A549 (cell line): ENCODE measurements at regions of chr15 and their contacts with region 1.

Region 1: DNA sequence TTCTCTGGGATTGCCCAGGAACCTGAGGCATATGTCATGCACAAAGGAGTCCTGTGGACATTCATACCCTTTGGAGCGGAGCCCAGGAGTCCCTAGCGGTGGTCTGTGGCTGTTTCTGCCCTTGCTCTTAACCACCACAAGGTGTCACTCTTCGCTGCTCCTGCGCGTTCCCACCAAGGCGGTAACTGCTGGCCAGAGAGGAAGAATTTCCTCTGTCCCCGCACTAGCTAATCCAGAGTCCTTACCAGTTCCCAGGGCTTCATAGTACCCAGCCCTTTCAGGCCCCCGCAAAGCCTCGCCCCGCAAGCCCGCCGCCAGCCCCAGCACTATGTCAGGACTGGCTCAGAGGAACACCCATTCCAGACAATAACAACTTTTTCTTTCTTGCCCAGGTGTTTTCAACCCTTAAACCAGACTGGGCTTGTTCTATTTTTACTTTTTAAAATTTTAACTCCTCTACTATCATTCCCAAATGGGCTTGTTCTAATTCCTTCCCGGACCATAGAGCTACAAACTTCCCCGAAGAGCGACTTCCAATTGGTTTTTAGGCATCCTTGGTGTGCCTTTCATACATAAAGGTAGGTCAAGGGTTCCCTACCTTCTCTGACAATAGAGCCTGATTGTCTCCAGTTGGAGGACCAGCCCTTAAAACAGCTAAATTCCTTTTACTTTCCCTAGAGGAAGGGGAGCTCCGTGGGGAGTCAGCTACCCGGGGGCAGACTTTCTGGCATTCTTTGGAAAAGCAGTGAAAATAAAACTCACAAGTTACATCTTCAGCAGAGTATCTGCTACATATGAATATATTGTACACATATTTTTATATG is 31.8 kb upstream of the ZNF774 start:
- DNase-seq: peak; percentile 92 to 95
- ATAC-seq: peak; percentile 98 to 99
- H3K4me3 ChIP-seq: no peak overlapping the region
- H3K27ac ChIP-seq: peak overlapping the region; percentile 60 to 76
- H3K4me1 ChIP-seq: peaks cover 13% of the 10 kb centered on the region
- CTCF ChIP-seq: peak; percentile 99
- EP300 ChIP-seq: no peak
- POLR2A ChIP-seq: no peak
- RAD21 ChIP-seq: peak; percentile 99 to 100

Region 2: DNA sequence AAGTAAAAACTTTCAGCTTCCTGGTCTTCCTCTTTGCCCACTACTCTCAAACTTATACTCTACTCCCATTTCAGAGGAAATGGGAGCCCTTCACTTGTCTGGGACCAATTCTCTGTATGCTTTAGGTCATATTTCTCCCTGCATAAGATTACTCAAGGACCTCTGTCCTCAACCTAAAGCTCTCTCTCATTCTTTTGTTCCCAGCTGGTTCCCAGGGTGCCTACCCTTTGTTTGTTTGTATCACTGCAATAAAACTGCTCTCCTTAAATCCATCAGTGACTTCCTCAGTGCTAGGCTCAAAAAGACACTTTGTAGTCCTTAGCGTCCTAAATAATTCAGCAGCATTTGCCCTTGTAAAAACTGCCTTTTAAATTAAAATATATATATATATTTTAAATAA is 51.9 kb before region 1 on chr15:
- CTCF ChIA-PET with region 1: no interaction called
- POLR2A ChIA-PET with region 1: no interaction called
- DNase-seq: no peak
- ATAC-seq: no peak
- H3K4me3 ChIP-seq: no peak overlapping the region
- H3K27ac ChIP-seq: no peak overlapping the region
- H3K4me1 ChIP-seq: peaks cover 31% of the 10 kb centered on the region
- CTCF ChIP-seq: no peak
- EP300 ChIP-seq: no peak
- POLR2A ChIP-seq: no peak
- RAD21 ChIP-seq: no peak

Region 3: DNA sequence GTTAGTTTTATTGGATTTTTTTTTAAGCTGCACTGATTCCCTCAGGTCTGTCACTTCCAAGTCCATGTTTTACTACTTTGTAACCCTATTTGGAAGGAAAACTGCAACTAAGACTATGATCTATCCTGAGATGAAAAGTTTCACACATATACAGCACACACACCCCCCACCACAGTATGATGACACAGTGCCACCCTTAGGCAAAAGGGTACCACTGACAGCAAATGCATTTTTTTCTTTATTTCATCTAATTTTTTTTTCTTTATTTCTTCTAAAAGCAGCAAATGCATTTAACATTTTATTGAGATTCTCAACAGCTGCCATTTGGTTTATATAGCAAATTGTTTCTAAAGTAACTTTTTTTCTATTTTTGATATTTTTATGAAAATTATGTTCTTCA is 33.6 kb before region 1 on chr15:
- CTCF ChIA-PET with region 1: interaction called, 45 read pairs
- POLR2A ChIA-PET with region 1: no interaction called
- DNase-seq: peak; percentile 55 to 67
- ATAC-seq: peak; percentile 83 to 90; a peak in 5 of 6 replicates
- H3K4me3 ChIP-seq: no peak overlapping the region
- H3K27ac ChIP-seq: no peak overlapping the region
- H3K4me1 ChIP-seq: no peaks in the 10 kb centered on the region
- CTCF ChIP-seq: peak; percentile 86
- EP300 ChIP-seq: no peak
- POLR2A ChIP-seq: no peak
- RAD21 ChIP-seq: peak; percentile 81 to 90

Region 4: DNA sequence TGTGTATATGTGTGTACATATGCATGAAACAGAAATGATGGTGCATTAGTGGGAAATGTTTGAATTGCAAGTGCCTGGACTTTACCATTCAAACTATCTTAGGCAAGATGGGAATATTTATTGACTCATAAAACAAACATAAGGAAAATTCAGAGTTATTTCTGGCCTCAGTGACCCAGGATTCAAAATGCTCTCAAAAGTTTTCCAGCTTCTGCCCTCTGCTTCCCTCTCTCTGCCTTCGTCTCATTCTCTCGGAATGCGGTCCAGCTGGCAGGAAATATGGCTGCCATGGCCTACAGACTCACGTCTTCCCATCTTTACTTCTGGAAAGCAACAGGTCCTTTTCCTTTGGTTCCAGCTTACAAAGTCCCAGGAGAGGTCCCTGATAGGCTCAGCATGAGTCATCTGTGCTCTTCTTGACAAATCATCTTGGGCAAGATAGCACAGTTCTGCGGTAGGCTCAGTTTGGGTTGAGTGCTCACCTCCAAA is 23.1 kb after region 1 on chr15:
- CTCF ChIA-PET with region 1: interaction called, 119 read pairs
- POLR2A ChIA-PET with region 1: no interaction called
- DNase-seq: peak in 1 of 2 experiments; percentile 43
- ATAC-seq: peak; percentile 41 to 62; a peak in 4 of 6 replicates
- H3K4me3 ChIP-seq: no peak overlapping the region
- H3K27ac ChIP-seq: no peak overlapping the region
- H3K4me1 ChIP-seq: peaks cover 13% of the 10 kb centered on the region
- CTCF ChIP-seq: no peak
- EP300 ChIP-seq: no peak
- POLR2A ChIP-seq: no peak
- RAD21 ChIP-seq: no peak

Region 5: DNA sequence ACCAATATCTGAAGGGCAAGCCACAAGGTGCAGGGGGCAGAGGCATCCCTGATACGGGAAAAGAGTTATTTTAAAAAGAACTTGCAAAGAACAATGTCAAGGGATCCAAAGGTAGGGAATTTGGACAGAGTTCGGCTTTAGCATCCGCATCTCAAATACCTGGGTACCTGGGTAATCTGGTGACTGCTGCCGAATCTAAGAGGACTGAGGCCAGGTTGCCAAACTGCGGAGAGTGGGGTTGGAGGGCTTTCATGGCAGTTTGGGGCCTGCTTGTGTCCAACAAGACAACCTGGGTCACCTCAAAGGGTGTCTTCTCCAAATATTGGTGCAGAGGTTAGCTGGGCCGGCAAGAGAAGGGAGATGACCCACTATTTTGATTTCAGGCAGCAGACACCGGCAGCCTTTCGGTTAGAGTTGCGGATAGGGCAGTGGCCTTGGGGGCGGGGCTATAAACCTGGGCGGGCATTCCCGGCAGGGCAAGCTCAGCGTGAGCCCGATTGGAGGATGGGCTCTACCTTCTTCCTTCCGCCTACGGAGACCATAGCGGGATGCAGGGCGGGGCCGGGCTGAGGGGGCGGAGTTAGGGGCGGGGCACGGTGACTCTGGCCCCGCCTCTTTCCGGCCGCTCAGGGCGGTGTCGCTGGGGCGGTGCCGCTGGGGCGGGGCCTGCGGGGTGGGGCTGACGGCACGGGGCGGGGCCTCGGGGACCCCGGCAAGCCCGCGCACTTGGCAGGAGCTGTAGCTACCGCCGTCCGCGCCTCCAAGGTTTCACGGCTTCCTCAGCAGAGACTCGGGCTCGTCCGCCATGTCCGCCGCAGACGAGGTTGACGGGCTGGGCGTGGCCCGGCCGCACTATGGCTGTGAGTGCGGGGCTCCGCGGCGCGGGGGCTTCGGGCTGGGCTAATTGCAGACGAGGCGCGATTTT is 67.5 kb after region 1 on chr15 and contains the start of gene IQGAP1:
- CTCF ChIA-PET with region 1: interaction called, 18 read pairs
- POLR2A ChIA-PET with region 1: interaction called, 3 read pairs
- DNase-seq: peak; percentile 98
- ATAC-seq: peak; percentile 96 to 97
- H3K4me3 ChIP-seq: peak within 1 kb of the TSS; percentile 78
- H3K27ac ChIP-seq: peak within 1 kb of the TSS; percentile 93 to 95
- H3K4me1 ChIP-seq: peaks cover 10% of the 10 kb centered on the region; the same call in 2 of the 3 replicates
- CTCF ChIP-seq: no peak
- EP300 ChIP-seq: no peak
- POLR2A ChIP-seq: peak; percentile 94
- RAD21 ChIP-seq: peak in 1 of 2 experiments; percentile 37; a peak in 2 of 5 replicates
- polyA plus RNA-seq, gene IQGAP1: 168 and 181 TPM in 2 replicates

Region 6: GRCh38 chr15:90425726-90426346 is 105.6 kb after region 1 on chr15:
- CTCF ChIA-PET with region 1: interaction called, 23 read pairs
- POLR2A ChIA-PET with region 1: no interaction called
- DNase-seq: no peak
- ATAC-seq: no peak
- H3K4me3 ChIP-seq: no peak overlapping the region
- H3K27ac ChIP-seq: peak overlapping the region in 1 of 2 experiments; percentile 45; a peak in 3 of 6 replicates
- H3K4me1 ChIP-seq: peaks cover 32% of the 10 kb centered on the region
- CTCF ChIP-seq: no peak
- EP300 ChIP-seq: no peak
- POLR2A ChIP-seq: no peak
- RAD21 ChIP-seq: no peak

Region 7: GRCh38 chr15:90482124-90483011 is 162.1 kb after region 1 on chr15:
- CTCF ChIA-PET with region 1: interaction called, 412 read pairs
- POLR2A ChIA-PET with region 1: interaction called, 3 read pairs
- DNase-seq: peak; percentile 35 to 64
- ATAC-seq: peak; percentile 83 to 87; a peak in 5 of 6 replicates
- H3K4me3 ChIP-seq: no peak overlapping the region
- H3K27ac ChIP-seq: no peak overlapping the region
- H3K4me1 ChIP-seq: no peaks in the 10 kb centered on the region
- CTCF ChIP-seq: peak; percentile 98
- EP300 ChIP-seq: no peak
- POLR2A ChIP-seq: no peak
- RAD21 ChIP-seq: peak; percentile 98

Region 8: DNA sequence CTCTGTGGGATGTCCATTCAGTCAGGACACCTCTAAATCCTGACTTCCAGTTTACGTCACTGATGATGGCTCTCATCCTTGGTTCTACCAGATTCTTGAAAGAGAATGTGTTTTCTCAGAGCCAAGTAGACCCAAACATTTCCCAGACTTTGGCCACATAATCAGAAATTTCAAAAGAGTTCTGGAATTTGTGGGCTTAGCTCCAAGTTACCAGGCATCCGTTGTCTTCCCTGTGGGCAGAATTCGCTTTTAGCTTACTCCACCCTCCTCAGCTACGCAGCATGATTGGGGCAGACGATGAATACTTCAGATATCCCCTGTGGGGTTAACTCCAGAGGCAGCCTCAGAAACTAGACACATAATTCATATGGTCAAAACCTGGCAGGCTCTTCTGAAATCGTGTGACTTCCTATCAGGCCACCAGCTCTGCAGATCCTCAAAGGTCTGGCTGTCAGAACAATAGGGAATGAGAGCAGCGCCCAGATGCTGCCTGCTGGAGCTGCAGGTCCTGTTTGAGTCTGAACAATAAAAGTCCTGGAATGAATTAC is 240.0 kb after region 1 on chr15:
- CTCF ChIA-PET with region 1: interaction called, 12 read pairs
- POLR2A ChIA-PET with region 1: no interaction called
- DNase-seq: peak in 1 of 2 experiments; percentile 55
- ATAC-seq: peak; percentile 51 to 78; a peak in 4 of 6 replicates
- H3K4me3 ChIP-seq: no peak overlapping the region
- H3K27ac ChIP-seq: 0 out of 6 replicates have a peak overlapping the region, but pooled peaks have one; percentile 2 to 16
- H3K4me1 ChIP-seq: peaks cover 48% of the 10 kb centered on the region; the same call in 2 of the 3 replicates
- CTCF ChIP-seq: no peak
- EP300 ChIP-seq: no peak
- POLR2A ChIP-seq: no peak
- RAD21 ChIP-seq: no peak